Dendritic cell treated with granulocyte-macrophage colony-stimulating factor and Interleukin-4, amounts not matched to agents 40 ng/mL and 50 ng/mL, for 4 days (primary cell): ENCODE measurements at regions of chr22 and their contacts with region 1.

Region 1: GRCh38 chr22:26404851-26405421 is 24.1 kb upstream of the ASPHD2 start:
- H3K4me3 Mint-ChIP-seq: peak overlapping the region; percentile 54
- H3K27ac Mint-ChIP-seq: peak overlapping the region; percentile 67
- H3K4me1 Mint-ChIP-seq: peaks cover 58% of the 10 kb centered on the region
- H3K27me3 Mint-ChIP-seq: peaks cover 7% of the 10 kb centered on the region

Region 2: DNA sequence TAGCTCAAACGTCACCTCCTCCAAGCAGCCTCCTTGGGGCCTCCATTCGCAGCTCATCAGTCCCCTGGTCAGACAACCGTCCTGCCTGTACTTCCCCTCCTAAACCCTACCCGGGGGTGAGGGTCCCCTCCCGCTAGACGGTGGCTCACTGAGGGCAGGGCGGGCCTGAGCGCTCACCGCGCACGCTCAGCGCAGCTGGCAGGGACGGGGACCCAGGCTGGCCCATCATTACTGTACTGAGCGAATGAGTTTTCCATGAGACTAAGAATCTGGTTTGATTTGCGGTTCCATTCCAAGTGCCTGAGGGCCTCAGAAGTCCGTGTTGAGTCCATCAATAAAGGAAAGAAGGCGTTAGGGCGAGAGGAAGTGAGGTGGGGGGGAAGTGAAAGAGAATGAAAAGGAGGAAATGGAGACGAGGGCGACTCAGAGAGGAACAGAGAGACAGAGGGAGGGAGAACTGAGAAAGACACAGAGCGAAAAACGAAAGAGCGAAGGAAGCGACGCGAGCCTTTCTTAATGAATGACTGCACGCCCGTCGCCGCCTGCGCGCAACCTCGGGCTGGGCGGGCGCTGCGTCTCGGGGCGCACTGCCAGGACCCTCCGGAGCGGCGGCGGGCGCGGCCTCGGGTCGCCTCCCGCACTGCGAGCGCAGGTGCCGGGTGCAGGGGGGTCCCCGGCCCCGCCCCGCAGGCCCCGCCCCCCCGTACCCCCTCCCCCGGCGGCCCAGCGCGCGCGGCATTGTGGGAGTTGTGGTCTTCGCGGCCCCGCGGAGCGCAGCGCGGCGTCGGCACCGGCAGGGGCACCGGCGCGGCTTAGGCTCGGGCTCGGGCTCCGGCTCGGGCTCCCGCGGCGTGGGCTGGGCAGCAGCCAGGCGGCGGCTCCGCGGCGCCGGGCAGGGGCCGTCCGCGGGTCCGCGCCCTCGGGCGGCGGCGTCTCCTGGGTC is 23.9 kb after region 1 on chr22 and contains the start of gene ASPHD2:
- intact Hi-C with region 1: loop called (anchors 2 kb)
- H3K4me3 Mint-ChIP-seq: peak within 1 kb of the TSS; percentile 89
- H3K27ac Mint-ChIP-seq: peak within 1 kb of the TSS; percentile 94
- H3K4me1 Mint-ChIP-seq: peaks cover 61% of the 10 kb centered on the region
- H3K27me3 Mint-ChIP-seq: peaks cover 1% of the 10 kb centered on the region